Activated T-helper 1 cell treated with anti-CD3 and anti-CD28 coated beads, Interleukin-12 subunit alpha, Interleukin-12 subunit beta, Interleukin-2, Interleukin-4 antibody, amounts not matched to agents 30 ng/mL and 10 ng/mL and 1 ng/mL, durations not matched to agents 14 hours and 24 hours and 36 hours (primary cell): ENCODE measurements at regions of chr10 and their contacts with region 1.

Region 1: DNA sequence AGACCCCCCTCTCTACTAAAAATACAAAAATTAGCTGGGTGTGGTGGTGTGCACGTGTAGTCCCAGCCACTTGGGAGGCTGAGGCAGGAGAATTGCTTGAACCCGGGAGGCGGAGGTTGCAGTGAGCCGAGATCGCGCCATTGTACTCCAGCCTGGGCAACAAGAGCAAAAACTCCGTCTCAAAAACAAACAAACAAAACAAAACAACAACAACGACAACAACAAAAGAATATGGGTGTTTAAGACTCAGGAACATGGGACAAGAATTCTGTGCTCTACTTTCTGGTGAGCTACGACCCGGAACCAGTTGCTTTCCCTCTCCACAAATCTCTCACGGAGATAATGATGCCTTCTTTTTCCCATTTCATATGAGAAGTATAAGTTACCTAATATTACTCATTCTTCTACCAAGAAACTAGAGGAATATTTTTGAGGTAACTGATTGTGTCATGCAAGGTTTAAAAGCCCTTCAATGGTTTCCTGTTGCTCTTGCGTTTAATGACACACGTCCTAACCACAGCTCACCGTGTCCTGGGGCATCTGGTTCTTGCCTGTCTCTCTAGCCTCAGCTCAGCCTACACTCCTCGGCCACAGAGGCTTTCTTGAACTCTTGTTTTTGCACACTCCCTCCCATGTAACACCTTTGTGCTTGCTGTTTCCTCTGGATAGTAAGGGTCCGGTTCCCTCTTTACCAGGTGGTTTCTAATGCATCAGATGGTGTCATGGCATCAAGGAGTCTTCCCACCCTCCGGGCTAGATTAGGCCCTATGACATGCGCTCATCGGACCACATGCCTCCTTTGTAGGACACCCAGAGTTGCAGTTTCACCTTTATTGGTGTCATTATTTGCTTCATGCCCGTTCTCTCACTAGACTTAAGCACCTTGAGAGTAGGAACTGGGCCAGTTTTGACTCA is 67.5 kb downstream of the PFKFB3 start:
- DNase-seq: peak; percentile 72
- H3K4me3 Mint-ChIP-seq: peak overlapping the region; percentile 55
- H3K27ac Mint-ChIP-seq: peak overlapping the region; percentile 97
- H3K4me1 Mint-ChIP-seq: peaks cover 80% of the 10 kb centered on the region
- H3K27me3 Mint-ChIP-seq: no peaks in the 10 kb centered on the region

Region 2: GRCh38 chr10:6144406-6145165 is 125.6 kb before region 1 on chr10:
- intact Hi-C with region 1: loop called (anchors 2 kb)
- DNase-seq: peak; percentile 89
- H3K4me3 Mint-ChIP-seq: peak overlapping the region; percentile 85
- H3K27ac Mint-ChIP-seq: peak overlapping the region; percentile 86
- H3K4me1 Mint-ChIP-seq: peaks cover 82% of the 10 kb centered on the region
- H3K27me3 Mint-ChIP-seq: no peaks in the 10 kb centered on the region

Region 3: DNA sequence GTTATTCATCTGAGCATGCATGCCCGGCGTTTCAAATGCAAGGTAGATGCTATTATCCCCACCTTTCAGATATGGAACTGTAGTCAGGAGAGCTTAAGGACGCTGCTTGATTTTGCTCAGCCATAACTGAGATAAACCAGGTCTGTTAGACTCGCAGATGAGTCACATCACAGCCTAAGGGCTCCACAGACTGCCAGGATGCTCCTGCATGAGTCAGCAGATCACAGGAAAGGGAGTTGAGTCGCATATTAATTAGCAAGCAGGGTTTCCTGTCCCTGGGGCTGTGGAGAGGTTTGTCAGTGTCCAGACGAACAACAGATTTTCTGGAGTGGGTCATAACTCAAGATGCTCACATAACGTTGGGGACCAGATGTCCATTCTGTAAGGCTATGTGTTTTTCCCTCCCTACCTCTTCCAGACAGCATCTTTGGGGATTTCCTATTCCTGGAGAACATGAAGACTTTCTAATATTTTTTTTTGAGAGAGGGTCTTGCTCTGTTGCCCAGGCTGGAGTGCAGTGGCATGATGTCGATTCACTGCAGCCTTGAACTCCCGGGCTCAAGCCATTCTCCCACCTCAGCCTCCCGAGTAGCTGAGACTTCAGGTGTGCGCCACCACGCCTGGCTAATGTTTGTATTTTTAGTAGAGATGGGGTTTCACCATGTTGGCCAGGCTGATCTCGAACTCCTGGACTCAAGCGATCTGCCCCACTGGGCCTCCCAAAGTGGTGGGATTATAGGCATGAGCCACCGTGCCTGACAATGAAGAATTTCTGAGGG is 30.8 kb before region 1 on chr10:
- intact Hi-C with region 1: loop called (anchors 1 kb)
- DNase-seq: peak; percentile 54
- H3K4me3 Mint-ChIP-seq: no peak overlapping the region
- H3K27ac Mint-ChIP-seq: peak overlapping the region; percentile 50
- H3K4me1 Mint-ChIP-seq: peaks cover 24% of the 10 kb centered on the region
- H3K27me3 Mint-ChIP-seq: no peaks in the 10 kb centered on the region

Region 4: DNA sequence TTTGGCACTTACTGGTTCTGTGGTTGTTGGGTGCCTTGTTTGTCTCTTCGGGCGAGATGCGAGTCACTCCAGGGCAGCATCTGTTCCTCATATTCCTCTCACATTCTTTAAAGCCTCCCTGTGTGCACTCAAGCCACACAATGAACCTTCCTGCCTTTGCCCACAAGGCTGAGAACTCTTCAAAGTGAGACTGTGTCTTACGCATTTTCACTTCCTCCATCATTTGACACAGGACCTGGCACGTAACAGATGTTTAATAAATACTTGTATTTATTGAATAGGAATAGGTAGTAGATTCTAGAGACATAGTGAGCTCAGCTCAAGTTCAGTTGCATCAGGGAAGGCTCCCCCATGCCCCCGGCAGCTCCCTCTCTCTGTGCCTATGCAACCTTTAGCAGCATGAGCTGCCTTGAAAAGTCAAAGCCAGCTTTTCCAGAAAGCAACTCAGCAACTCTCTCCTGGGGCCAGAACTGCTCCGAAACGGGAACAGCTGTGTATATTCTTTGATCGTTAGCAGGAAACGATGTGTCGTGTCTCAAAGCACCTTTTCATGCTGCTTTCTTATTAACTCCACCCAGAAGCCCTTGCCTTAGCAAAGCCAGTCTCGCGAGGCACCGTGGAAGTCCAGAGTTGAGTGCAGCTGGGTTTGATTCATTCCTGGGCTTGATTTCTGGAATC is 30.0 kb after region 1 on chr10:
- intact Hi-C with region 1: loop called (anchors 1 kb)
- DNase-seq: no peak
- H3K4me3 Mint-ChIP-seq: peak overlapping the region; percentile 6
- H3K27ac Mint-ChIP-seq: peak overlapping the region; percentile 56
- H3K4me1 Mint-ChIP-seq: peaks cover 60% of the 10 kb centered on the region
- H3K27me3 Mint-ChIP-seq: no peaks in the 10 kb centered on the region

Region 5: DNA sequence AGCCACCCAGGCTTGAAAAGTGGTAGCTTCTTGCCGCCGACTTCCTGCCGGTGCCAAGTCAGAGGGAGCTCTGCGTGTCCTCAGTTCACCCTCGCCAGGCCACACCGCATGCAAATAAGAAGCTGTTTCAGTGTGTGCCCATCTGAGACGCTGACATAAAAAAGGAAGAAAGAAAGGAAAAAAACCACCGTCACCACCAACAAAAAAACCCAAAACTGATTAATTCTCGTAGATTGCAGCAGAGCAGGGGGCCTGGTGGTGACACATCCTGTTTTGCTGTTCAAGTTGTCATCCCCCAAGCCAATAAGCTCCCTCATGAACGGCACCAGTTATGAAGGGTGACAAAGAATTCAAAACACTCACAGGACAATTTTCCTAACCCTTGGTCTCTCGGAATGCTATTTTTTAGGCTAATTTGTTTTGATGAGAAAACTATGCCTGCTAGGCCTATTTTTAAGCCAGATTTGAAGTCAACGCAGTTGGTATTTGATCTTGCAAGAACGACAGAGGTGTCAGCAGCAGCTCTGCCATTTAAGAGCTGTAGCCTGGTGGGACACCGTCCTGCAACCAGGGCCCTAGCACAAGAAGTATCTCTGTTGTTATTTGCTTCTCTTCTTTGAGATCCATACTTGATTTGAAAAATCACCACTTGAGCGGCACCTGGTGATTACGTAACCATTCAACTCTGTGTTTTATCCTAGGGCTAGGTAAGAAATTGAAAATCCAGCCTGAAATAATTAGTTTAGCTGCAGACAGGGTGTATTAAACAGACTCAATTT is 78.1 kb after region 1 on chr10:
- intact Hi-C with region 1: loop called (anchors 1 kb)
- DNase-seq: peak; percentile 62
- H3K4me3 Mint-ChIP-seq: peak overlapping the region; percentile 74
- H3K27ac Mint-ChIP-seq: peak overlapping the region; percentile 96
- H3K4me1 Mint-ChIP-seq: peaks cover 50% of the 10 kb centered on the region
- H3K27me3 Mint-ChIP-seq: no peaks in the 10 kb centered on the region

Region 6: GRCh38 chr10:6593241-6593671 is 323.0 kb after region 1 on chr10:
- intact Hi-C with region 1: loop called (anchors 5 kb)
- DNase-seq: no peak
- H3K4me3 Mint-ChIP-seq: peak overlapping the region; percentile 34
- H3K27ac Mint-ChIP-seq: peak overlapping the region; percentile 93
- H3K4me1 Mint-ChIP-seq: peaks cover 95% of the 10 kb centered on the region
- H3K27me3 Mint-ChIP-seq: no peaks in the 10 kb centered on the region